Activated T-helper 1 cell treated with anti-CD3 and anti-CD28 coated beads, Interleukin-12 subunit alpha, Interleukin-12 subunit beta, Interleukin-2, Interleukin-4 antibody, amounts not matched to agents 30 ng/mL and 10 ng/mL and 1 ng/mL, durations not matched to agents 14 hours and 24 hours and 36 hours (primary cell): ENCODE measurements at regions of chr18 and their contacts with region 1.

Region 1: DNA sequence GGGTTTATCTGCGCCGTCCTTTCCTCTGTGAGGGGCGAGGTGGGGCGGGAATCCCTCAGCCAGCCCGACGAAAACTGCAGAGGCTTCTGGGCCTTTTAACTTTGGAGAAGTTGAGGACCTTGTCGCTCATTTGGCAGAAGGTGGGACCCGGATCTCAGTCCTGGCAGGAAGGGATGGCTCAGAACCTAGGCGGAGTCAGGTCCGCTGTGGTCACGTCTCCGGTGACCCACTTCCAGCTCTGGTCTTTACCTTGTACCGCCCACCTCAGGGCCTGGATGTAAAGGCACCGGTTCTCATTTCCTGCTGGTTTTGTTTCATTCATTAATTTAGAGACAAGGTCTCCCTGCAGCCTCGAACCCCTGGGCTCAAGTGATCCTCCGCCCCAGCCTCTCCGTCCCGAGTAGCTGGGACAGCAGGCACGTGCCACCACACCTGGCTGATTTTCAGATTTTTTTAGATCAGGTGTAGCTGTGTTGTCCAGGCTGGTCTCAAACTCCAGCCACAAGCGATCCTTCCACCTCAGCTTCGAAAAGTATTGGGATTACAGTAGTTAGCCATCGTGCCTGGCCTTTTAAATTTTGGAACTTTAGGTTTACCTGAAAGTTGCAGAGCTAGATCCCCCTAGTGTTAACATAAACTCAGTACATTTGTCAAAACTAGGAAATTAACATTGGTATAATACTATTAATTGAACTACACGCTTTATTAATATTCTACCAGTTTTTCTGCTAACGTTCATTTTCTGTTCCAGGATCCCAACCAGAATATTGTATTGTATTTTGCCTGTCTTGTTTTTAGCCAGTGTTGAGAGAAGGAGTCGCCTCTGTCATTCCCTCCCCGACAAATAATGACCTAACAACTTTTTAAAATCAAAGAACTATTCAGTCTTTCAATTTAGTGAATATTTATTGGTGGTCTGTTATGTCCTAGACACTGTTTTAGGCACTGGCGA is 852 bp downstream of the POLI start:
- DNase-seq: peak; percentile 54
- H3K4me3 Mint-ChIP-seq: peak overlapping the region; percentile 81
- H3K27ac Mint-ChIP-seq: peak overlapping the region; percentile 96
- H3K4me1 Mint-ChIP-seq: peaks cover 44% of the 10 kb centered on the region
- H3K27me3 Mint-ChIP-seq: no peaks in the 10 kb centered on the region

Region 2: DNA sequence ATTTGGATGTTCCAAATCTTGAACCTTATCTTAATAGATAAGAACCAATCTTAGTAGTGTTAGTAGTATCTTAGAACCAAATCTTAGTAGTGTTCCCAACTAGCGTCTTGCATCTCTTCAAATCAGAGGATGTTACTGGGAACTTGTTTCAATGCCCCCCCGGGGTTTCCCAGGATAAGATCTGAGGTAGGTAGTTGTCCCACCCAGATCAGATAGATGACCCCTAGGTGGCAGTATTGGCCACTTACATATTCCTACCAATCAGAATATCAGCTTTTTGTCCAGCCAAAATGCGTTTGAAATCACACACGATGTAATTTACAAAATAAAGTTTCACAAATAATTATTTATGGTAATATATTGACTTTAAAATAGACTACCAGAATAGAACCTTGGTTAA is 360.5 kb before region 1 on chr18:
- intact Hi-C with region 1: loop called (anchors 5 kb)
- DNase-seq: no peak
- H3K4me3 Mint-ChIP-seq: no peak overlapping the region
- H3K27ac Mint-ChIP-seq: no peak overlapping the region
- H3K4me1 Mint-ChIP-seq: no peaks in the 10 kb centered on the region
- H3K27me3 Mint-ChIP-seq: peaks cover 5% of the 10 kb centered on the region

Region 3: DNA sequence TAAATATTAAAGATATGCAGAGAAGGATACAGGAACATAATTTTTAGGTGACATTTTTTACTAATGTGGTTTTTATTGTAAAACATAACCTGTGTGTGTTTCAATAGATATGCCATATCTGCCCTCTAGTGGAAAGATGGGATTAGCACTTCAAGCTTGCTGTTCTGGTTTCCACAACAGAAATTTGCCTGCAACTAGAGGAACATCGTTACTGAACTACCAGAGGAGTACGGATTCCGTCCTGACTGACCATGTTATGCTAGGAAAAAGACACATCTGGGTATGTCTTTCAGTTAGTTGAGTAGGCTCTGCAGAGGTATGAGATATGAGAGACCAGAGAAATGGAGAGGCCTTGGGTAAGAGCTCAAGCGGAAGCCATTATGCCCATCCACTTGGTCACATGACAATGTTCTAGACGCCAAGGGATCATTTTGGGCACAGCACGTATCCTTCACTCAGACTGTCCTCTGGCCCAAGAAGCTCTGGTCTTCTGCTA is 150.6 kb before region 1 on chr18:
- intact Hi-C with region 1: no loop called
- DNase-seq: peak; percentile 13
- H3K4me3 Mint-ChIP-seq: peak overlapping the region; percentile 57
- H3K27ac Mint-ChIP-seq: peak overlapping the region; percentile 56
- H3K4me1 Mint-ChIP-seq: peaks cover 19% of the 10 kb centered on the region
- H3K27me3 Mint-ChIP-seq: peaks cover 4% of the 10 kb centered on the region

Region 4: GRCh38 chr18:54173980-54174630 is 96.1 kb before region 1 on chr18:
- intact Hi-C with region 1: loop called (anchors 1 kb)
- DNase-seq: no peak
- H3K4me3 Mint-ChIP-seq: peak overlapping the region; percentile 49
- H3K27ac Mint-ChIP-seq: peak overlapping the region; percentile 96
- H3K4me1 Mint-ChIP-seq: peaks cover 69% of the 10 kb centered on the region
- H3K27me3 Mint-ChIP-seq: no peaks in the 10 kb centered on the region

Region 5: GRCh38 chr18:54181856-54182602 is 88.1 kb before region 1 on chr18:
- intact Hi-C with region 1: loop called (anchors 1 kb)
- DNase-seq: no peak
- H3K4me3 Mint-ChIP-seq: no peak overlapping the region
- H3K27ac Mint-ChIP-seq: no peak overlapping the region
- H3K4me1 Mint-ChIP-seq: peaks cover 22% of the 10 kb centered on the region
- H3K27me3 Mint-ChIP-seq: no peaks in the 10 kb centered on the region

Region 6: GRCh38 chr18:54296062-54296461 is 25.9 kb after region 1 on chr18:
- intact Hi-C with region 1: no loop called
- DNase-seq: no peak
- H3K4me3 Mint-ChIP-seq: no peak overlapping the region
- H3K27ac Mint-ChIP-seq: no peak overlapping the region
- H3K4me1 Mint-ChIP-seq: no peaks in the 10 kb centered on the region
- H3K27me3 Mint-ChIP-seq: no peaks in the 10 kb centered on the region

Region 7: DNA sequence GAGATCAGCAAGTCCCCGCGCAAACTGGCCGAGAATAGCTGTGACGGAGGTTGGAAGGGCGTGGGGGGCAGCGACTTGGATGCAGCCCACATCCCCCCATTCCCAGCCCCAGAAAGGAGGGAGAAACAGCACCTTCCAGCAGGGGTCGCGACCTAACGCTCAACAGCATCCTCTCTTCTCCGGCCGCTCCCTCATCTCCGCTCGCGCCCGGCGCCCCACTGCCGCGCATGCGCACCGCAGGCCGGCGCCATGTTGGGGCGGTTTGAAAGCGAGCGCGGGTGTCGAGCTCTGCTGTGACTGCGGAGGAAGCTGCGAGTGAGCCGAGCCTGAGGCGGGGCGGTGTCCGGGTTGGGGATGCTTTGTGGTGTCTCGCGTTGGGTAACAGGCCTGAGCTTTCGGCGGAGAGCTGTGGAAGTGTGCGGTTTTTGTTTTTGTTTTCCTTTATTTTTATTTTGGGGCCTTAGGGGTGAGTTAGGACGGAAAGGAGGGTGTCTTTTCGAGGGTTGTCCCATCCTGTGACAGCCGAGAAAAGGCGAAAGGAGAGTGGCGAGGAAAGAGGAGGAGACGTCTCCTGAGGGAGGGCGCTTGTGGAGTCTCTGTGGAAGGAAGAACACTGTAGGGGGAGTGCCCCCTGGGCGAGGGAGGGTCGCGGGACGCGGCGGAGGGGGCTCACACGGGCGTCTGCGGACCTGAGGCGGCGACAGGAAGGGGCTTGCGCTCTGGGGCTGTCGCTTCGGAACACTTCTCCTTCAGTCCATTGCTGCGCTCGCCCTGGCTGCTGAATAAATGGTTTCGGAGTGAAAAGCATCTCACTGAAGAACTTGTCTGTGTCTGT is 87.7 kb after region 1 on chr18 and contains the starts of genes C18orf54 and STARD6:
- intact Hi-C with region 1: loop called (anchors 1 kb)
- DNase-seq: peak; percentile 93
- H3K4me3 Mint-ChIP-seq: peak within 1 kb of the TSS; percentile 98
- H3K27ac Mint-ChIP-seq: peak within 1 kb of the TSS; percentile 97
- H3K4me1 Mint-ChIP-seq: peaks cover 34% of the 10 kb centered on the region
- H3K27me3 Mint-ChIP-seq: no peaks in the 10 kb centered on the region
- total RNA-seq, gene C18orf54: 10.4 and 10.7 TPM in 2 replicates
- total RNA-seq, gene STARD6: 0.54 and 0.65 TPM in 2 replicates

Region 8: DNA sequence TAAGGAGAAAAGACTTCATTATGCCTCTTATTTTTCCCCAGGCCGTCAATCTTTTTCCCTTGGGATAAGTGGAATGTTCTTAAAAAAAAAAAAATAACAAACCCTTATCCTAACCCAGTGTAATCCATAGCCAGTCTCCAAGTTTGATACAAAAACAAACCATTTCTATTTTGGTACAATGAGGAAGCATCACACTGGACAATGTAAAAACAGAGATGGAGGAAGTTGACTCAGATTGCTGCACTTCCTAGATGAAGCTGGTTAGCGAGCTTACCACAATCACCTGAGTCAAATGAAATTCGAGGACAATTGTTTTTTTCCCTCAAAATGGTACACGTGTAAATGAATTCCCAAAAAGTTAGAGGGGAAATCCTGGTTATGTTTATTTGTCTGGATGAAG is 1058.1 kb after region 1 on chr18:
- intact Hi-C with region 1: no loop called
- DNase-seq: no peak
- H3K4me3 Mint-ChIP-seq: no peak overlapping the region
- H3K27ac Mint-ChIP-seq: no peak overlapping the region
- H3K4me1 Mint-ChIP-seq: no peaks in the 10 kb centered on the region
- H3K27me3 Mint-ChIP-seq: peaks cover 9% of the 10 kb centered on the region

Region 9: DNA sequence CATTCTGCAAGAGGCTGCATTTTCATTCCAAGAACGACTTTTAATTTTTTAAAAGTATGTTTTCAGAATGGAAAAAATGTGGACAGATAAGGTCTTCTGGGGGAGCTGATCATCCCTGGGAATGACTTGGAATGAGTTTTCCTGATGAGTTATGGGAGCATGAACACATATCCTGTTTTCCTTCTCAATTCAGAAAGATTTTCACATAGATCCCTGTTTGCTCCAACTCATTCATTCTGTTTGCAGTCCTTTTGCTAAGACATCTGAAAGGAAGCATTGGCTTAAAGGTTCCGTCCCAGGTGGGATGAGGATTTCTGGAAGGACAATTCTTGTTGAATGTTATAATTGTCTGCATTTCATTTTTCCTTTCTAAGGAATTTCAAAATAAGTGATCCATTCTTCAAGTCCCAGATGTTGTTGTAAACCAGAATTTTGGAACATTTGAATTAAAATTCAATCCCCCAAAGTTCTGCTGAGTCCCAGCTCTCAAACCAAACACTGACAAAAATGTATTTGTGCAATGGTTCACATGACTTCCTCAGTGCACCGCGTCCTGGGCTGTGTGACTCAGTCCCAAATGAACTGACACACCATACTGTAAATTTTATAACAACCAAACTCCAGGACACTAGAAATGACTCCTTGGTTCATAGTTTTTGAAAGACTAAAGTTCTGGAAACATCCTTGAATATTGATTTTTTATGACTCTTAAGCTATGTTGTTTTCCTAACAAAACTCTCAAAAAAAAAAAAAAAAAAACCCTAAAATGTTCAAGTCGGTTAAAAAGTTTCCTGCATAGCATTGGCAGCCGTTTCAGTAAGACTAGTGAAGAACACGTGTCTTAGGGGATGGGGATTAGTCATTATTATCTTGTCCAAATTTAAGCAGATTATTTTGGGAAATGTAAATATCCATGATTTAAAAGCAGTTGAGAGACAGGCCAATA is 1599.7 kb after region 1 on chr18:
- intact Hi-C with region 1: loop called (anchors 10 kb)
- DNase-seq: no peak
- H3K4me3 Mint-ChIP-seq: no peak overlapping the region
- H3K27ac Mint-ChIP-seq: no peak overlapping the region
- H3K4me1 Mint-ChIP-seq: no peaks in the 10 kb centered on the region
- H3K27me3 Mint-ChIP-seq: no peaks in the 10 kb centered on the region